GM10248 (cell line): ENCODE measurements at regions of chr2 and their contacts with region 1.

Region 1: GRCh38 chr2:43226558-43226954 is at the start of gene ZFP36L2:
- DNase-seq: peak; percentile 96
- CTCF ChIP-seq: no peak

Region 2: GRCh38 chr2:42974721-42975717 is 251.5 kb before region 1 on chr2:
- CTCF ChIA-PET with region 1: interaction called, 21 read pairs
- POLR2A ChIA-PET with region 1: no interaction called
- DNase-seq: peak; percentile 63
- CTCF ChIP-seq: peak; percentile 85

Region 3: GRCh38 chr2:43031471-43032212 is 194.9 kb before region 1 on chr2:
- CTCF ChIA-PET with region 1: no interaction called
- POLR2A ChIA-PET with region 1: no interaction called
- DNase-seq: no peak
- CTCF ChIP-seq: no peak

Region 4: GRCh38 chr2:43178602-43179542 is 47.7 kb before region 1 on chr2:
- CTCF ChIA-PET with region 1: interaction called, 19 read pairs
- POLR2A ChIA-PET with region 1: interaction called, 13 read pairs
- DNase-seq: no peak
- CTCF ChIP-seq: no peak

Region 5: GRCh38 chr2:43246641-43247040 is 20.1 kb after region 1 on chr2:
- CTCF ChIA-PET with region 1: interaction called, 56 read pairs
- POLR2A ChIA-PET with region 1: interaction called, 3 read pairs
- DNase-seq: no peak
- CTCF ChIP-seq: no peak

Region 6: GRCh38 chr2:43491065-43491639 is 264.6 kb after region 1 on chr2:
- CTCF ChIA-PET with region 1: interaction called, 55 read pairs
- POLR2A ChIA-PET with region 1: no interaction called
- DNase-seq: no peak
- CTCF ChIP-seq: no peak